ENCODE measurements at regions of chr18 and their contacts with region 1.

Region 1: GRCh38 chr18:34322365-34323289 is 97.9 kb upstream of the NOL4 start:
- DNase-seq: peak; percentile 42
- ATAC-seq: no peak
- H3K4me3 Mint-ChIP-seq: no peak overlapping the region
- H3K27ac Mint-ChIP-seq: no peak overlapping the region
- H3K4me1 Mint-ChIP-seq: no peaks in the 10 kb centered on the region
- H3K27me3 Mint-ChIP-seq: no peaks in the 10 kb centered on the region

Region 2: DNA sequence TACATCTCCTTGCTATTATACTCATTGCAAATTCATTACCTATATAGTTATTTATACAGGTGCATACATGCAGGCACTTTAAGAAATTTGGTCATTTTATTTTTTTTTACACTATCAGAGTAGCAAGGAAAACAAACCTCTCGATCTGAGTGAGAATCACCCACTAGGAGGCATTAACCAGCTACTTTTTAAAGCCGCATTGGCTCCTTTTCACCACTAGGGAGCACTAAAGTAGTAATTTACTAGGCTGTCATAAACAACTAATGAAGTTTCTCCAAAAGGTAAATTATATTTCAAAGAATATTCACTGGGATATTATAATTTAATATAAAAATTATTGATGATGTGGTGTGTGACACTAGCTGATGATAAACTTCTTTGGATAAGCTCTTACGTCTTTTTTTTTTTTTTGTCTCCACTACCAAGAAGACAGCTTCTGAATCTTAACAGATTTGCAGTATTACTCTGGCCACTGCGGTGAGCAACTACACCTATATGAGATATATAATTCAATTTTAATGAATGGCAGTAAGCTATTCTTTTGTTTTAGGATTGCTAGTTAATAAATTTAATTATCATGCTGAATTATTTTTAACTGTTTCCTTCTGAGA is 199.8 kb before region 1 on chr18:
- CTCF ChIA-PET with region 1: interaction called, 3 read pairs
- POLR2A ChIA-PET with region 1: no interaction called
- intact Hi-C with region 1: loop called (anchors 1 to 2 kb)
- DNase-seq: peak; percentile 23
- ATAC-seq: no peak
- H3K4me3 Mint-ChIP-seq: no peak overlapping the region
- H3K27ac Mint-ChIP-seq: no peak overlapping the region
- H3K4me1 Mint-ChIP-seq: no peaks in the 10 kb centered on the region
- H3K27me3 Mint-ChIP-seq: no peaks in the 10 kb centered on the region